Naive thymus-derived CD4-positive, alpha-beta T cell (primary cell): ENCODE measurements at regions of chr2 and their contacts with region 1.

Region 1: DNA sequence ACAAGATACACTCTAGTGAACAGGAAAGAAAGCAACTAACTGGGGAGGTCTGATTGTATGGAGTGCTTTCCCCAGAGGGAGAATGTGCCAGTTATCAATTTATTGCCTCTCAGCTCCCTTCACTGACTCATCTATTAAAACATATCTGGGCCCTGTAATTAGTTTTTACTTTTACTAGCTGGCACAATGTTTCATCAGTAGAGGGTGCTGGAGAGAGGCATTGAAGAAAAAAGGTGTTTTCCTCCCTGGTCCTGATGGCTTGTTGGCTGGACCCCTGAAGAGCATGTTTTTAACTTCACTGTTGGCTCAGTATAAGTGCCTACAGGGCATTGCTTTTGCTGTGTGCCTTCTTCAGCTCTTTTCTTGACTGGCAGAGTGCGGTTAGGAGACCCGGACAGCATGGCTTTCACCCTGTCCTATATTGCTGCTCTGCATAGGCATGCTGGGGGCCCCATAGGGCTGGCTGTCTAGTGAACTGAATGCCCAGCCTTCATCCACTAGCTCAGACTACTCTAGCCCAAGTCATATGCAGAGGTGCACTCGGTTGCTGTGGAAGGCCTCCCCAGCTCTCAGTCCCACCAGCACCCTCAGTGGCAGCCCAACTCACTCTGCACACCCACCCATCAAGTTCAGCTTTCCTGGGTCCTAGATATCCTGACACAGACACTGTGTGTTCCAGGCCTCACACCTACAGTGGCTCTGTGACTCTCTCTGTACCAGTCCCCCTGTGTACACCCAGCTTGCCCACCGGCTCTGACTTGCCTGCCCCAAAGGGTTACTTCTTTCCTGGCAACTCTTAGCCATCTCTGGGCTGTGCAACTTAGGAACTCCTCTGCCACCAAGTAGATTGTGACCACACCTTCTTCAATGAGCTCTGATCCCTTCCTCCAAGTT is 62.3 kb upstream of the ACYP2 start:
- DNase-seq: no peak
- ATAC-seq: peak; percentile 22
- H3K4me3 ChIP-seq: no peak overlapping the region
- H3K4me3 Mint-ChIP-seq: peak overlapping the region in 6 of 10 donors; percentile 36 to 77 (median 70)
- H3K27ac ChIP-seq: peak overlapping the region; percentile 56
- H3K27ac Mint-ChIP-seq: peak overlapping the region; percentile 70 to 94 (median 86)
- H3K4me1 ChIP-seq: peaks cover 6 to 20% of the 10 kb centered on the region in 2 donors
- H3K4me1 Mint-ChIP-seq: peaks cover 18 to 46% (median 31%) of the 10 kb centered on the region in 7 donors
- H3K27me3 ChIP-seq: no peaks in the 10 kb centered on the region
- H3K27me3 Mint-ChIP-seq: no peaks in the 10 kb centered on the region

Region 2: GRCh38 chr2:53896864-53897263 is 156.2 kb before region 1 on chr2:
- CTCF ChIA-PET with region 1: no interaction called
- POLR2A ChIA-PET with region 1: no interaction called
- intact Hi-C with region 1: loop called in 1 of 2 experiments (anchors 5 kb)
- DNase-seq: no peak
- ATAC-seq: no peak
- H3K4me3 ChIP-seq: no peak overlapping the region
- H3K4me3 Mint-ChIP-seq: no peak overlapping the region
- H3K27ac ChIP-seq: no peak overlapping the region
- H3K27ac Mint-ChIP-seq: peak overlapping the region in 1 of 9 donors; percentile 16
- H3K4me1 ChIP-seq: no peaks in the 10 kb centered on the region
- H3K4me1 Mint-ChIP-seq: peaks cover 0 to 2% (median 0%) of the 10 kb centered on the region in 7 donors
- H3K27me3 ChIP-seq: no peaks in the 10 kb centered on the region
- H3K27me3 Mint-ChIP-seq: no peaks in the 10 kb centered on the region

Region 3: GRCh38 chr2:53949457-53949856 is 103.6 kb before region 1 on chr2:
- CTCF ChIA-PET with region 1: no interaction called
- POLR2A ChIA-PET with region 1: no interaction called
- intact Hi-C with region 1: loop called in 1 of 2 experiments (anchors 5 kb)
- DNase-seq: peak in 1 of 9 donors; percentile 22
- ATAC-seq: peak; percentile 50
- H3K4me3 ChIP-seq: no peak overlapping the region
- H3K4me3 Mint-ChIP-seq: peak overlapping the region in 2 of 10 donors; percentile 11 to 40
- H3K27ac ChIP-seq: no peak overlapping the region
- H3K27ac Mint-ChIP-seq: peak overlapping the region in 2 of 9 donors; percentile 4 to 8
- H3K4me1 ChIP-seq: no peaks in the 10 kb centered on the region
- H3K4me1 Mint-ChIP-seq: peaks cover 15 to 64% (median 47%) of the 10 kb centered on the region in 7 donors
- H3K27me3 ChIP-seq: no peaks in the 10 kb centered on the region
- H3K27me3 Mint-ChIP-seq: no peaks in the 10 kb centered on the region

Region 4: DNA sequence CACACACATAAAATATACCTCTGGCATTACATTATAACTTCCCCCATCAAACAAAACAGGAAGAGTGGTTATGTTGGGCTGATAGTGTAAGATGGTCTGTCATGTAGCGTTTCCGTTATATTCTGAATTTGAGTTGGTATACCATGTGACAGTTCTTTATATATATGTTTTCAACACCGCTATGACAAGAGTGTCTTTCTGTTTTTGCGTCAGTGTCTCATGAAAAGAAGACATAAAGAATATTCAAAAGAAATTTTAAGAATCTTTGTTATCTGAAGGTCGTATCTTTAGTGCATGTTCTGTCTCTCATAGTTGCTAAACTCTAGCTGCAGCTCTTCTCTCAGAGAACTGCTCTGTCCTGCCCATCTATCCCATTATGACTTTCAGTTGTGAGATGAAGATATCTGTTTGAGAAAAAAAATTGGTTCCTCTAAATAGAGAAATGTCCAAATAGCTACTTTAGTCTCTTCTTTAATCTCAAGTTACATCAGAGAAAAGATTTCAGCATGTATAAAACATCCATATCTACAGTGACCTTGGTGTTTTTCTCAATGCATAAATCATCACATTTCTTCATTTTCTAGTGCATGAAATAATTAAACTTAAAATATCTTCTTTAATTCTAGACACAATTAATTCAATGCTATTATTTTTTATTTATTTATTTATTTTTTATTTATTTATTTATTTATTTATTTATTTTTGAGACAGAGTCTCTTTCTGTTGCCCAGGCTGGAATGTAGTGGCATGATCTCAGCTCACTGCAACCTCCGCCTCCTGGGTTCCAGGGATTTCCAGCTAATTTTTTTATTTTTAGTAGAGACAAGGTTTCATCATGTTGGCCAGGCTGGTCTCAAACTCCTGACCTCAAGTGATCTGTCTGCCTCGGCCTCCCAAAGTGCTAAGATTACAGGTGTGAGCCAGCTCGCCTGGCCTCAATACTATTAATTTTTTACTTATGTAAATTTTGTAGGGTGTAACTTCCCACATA is 58.0 kb before region 1 on chr2:
- CTCF ChIA-PET with region 1: interaction called, 4 read pairs
- POLR2A ChIA-PET with region 1: interaction called, 3 read pairs
- intact Hi-C with region 1: loop called in 1 of 2 experiments (anchors 2 kb)
- DNase-seq: peak in 7 of 9 donors; percentile 71 to 89 (median 86)
- ATAC-seq: peak; percentile 97
- H3K4me3 ChIP-seq: peak overlapping the region; percentile 24
- H3K4me3 Mint-ChIP-seq: peak overlapping the region; percentile 64 to 79 (median 73)
- H3K27ac ChIP-seq: peak overlapping the region; percentile 73
- H3K27ac Mint-ChIP-seq: peak overlapping the region; percentile 83 to 98 (median 91)
- H3K4me1 ChIP-seq: peaks cover 32 to 34% of the 10 kb centered on the region in 2 donors
- H3K4me1 Mint-ChIP-seq: peaks cover 20 to 35% (median 29%) of the 10 kb centered on the region in 7 donors
- H3K27me3 ChIP-seq: no peaks in the 10 kb centered on the region
- H3K27me3 Mint-ChIP-seq: no peaks in the 10 kb centered on the region

Region 5: GRCh38 chr2:54015798-54016699 is 37.0 kb before region 1 on chr2:
- CTCF ChIA-PET with region 1: no interaction called
- POLR2A ChIA-PET with region 1: interaction called, 3 read pairs
- intact Hi-C with region 1: loop called in 1 of 2 experiments (anchors 5 kb)
- DNase-seq: no peak
- ATAC-seq: no peak
- H3K4me3 ChIP-seq: no peak overlapping the region
- H3K4me3 Mint-ChIP-seq: peak overlapping the region in 3 of 10 donors; percentile 6 to 40 (median 35)
- H3K27ac ChIP-seq: no peak overlapping the region
- H3K27ac Mint-ChIP-seq: peak overlapping the region; percentile 63 to 92 (median 84)
- H3K4me1 ChIP-seq: peaks cover 10 to 25% of the 10 kb centered on the region in 2 donors
- H3K4me1 Mint-ChIP-seq: peaks cover 24 to 52% (median 45%) of the 10 kb centered on the region in 7 donors
- H3K27me3 ChIP-seq: no peaks in the 10 kb centered on the region
- H3K27me3 Mint-ChIP-seq: no peaks in the 10 kb centered on the region

Region 6: GRCh38 chr2:54030396-54030741 is 22.7 kb before region 1 on chr2:
- CTCF ChIA-PET with region 1: no interaction called
- POLR2A ChIA-PET with region 1: no interaction called
- intact Hi-C with region 1: no loop called
- DNase-seq: no peak
- ATAC-seq: no peak
- H3K4me3 ChIP-seq: no peak overlapping the region
- H3K4me3 Mint-ChIP-seq: no peak overlapping the region
- H3K27ac ChIP-seq: no peak overlapping the region
- H3K27ac Mint-ChIP-seq: no peak overlapping the region
- H3K4me1 ChIP-seq: no peaks in the 10 kb centered on the region
- H3K4me1 Mint-ChIP-seq: peaks cover 0 to 9% (median 3%) of the 10 kb centered on the region in 7 donors
- H3K27me3 ChIP-seq: no peaks in the 10 kb centered on the region
- H3K27me3 Mint-ChIP-seq: no peaks in the 10 kb centered on the region

Region 7: DNA sequence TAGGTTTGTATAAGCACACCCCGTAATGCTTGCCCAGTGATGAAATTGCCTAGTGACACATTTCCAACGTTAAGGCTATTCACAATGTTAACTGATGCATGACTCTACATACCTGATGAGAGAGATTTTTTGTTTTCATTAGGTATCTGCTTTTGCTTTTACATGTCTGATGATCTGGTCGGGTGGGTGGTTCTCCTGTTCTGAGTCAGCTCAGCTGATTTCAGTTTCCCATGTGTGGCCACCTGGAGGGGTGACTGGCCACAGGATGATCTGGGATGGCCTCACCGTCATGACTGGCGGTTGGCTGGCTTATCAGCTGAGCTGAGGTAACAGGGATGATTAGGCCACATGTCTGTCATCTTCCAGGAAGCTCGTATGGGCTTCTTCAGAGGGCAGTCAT is 28.5 kb after region 1 on chr2:
- CTCF ChIA-PET with region 1: no interaction called
- POLR2A ChIA-PET with region 1: no interaction called
- intact Hi-C with region 1: loop called in 1 of 2 experiments (anchors 2 kb)
- DNase-seq: peak in 1 of 9 donors; percentile 33
- ATAC-seq: no peak
- H3K4me3 ChIP-seq: no peak overlapping the region
- H3K4me3 Mint-ChIP-seq: no peak overlapping the region
- H3K27ac ChIP-seq: no peak overlapping the region
- H3K27ac Mint-ChIP-seq: no peak overlapping the region
- H3K4me1 ChIP-seq: no peaks in the 10 kb centered on the region
- H3K4me1 Mint-ChIP-seq: peaks cover 0 to 9% (median 0%) of the 10 kb centered on the region in 7 donors
- H3K27me3 ChIP-seq: no peaks in the 10 kb centered on the region
- H3K27me3 Mint-ChIP-seq: no peaks in the 10 kb centered on the region